Naive thymus-derived CD4-positive, alpha-beta T cell (primary cell): ENCODE measurements at regions of chr1 and their contacts with region 1.

Region 1: DNA sequence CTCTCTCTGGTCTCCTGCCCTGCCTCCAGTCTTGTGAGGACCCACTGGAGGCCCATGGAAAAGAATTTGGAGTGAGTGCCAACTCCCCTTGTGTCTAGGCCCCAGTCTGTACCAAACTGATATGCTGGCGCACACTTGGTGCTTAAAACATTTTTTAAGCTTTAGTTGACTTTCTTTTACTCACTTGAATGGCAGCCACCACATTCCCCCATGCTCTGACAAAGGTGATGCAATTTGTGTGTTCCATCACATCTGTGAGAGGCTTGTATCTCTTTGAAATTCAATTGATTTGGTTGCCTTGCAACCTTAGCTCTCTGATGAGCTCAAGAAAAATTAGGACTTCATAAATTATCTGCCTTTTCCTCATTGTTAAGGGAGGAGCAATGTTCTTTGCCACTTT is 30.5 kb upstream of the WDTC1 start:
- DNase-seq: no peak
- ATAC-seq: no peak
- H3K4me3 ChIP-seq: no peak overlapping the region
- H3K4me3 Mint-ChIP-seq: no peak overlapping the region
- H3K27ac ChIP-seq: no peak overlapping the region
- H3K27ac Mint-ChIP-seq: no peak overlapping the region
- H3K4me1 ChIP-seq: no peaks in the 10 kb centered on the region
- H3K4me1 Mint-ChIP-seq: no peaks in the 10 kb centered on the region
- H3K27me3 ChIP-seq: no peaks in the 10 kb centered on the region
- H3K27me3 Mint-ChIP-seq: peaks cover 0 to 5% (median 0%) of the 10 kb centered on the region in 5 donors

Region 2: DNA sequence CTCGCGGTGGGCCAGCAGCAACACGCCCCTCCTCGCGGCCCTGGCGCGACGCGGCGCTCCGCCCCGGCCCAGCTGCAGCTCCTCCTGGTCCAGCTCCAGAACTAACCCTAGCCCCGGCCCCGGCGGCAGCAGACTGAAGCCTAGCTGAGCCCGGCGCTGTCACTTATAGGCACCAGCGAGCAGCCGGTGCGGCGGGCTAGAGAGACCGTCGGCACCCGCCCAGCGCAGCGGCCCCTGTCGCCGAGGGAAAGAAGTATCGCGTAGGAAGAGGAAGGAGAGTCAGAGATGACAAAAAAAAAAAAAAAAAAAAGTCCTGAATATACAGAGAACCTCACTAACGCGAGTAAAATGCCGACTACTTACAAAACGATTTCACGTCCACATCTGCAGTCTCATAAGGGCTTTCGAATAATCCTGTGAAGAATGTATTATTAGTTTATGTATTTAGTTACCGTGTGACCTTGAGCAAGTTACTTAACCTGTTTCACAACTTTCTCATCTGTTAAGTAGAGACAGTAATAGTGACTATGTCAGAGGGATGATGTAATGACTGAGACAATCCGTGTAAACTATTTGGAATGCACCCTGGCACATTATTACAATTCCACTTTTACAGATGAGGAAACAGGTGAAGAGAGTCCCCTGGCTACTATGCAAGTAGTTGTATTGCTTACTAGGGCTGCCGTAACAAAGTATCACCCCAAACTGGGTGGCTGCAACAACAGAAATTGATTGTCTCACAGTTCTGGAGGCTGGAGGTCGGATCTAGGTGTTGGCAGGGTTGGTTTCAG is 48.8 kb before region 1 on chr1 and contains the start of gene SLC9A1:
- CTCF ChIA-PET with region 1: no interaction called
- POLR2A ChIA-PET with region 1: no interaction called
- intact Hi-C with region 1: loop called in 1 of 2 experiments (anchors 2 kb)
- DNase-seq: peak; percentile 90 to 96 (median 94)
- ATAC-seq: peak; percentile 98
- H3K4me3 ChIP-seq: peak within 1 kb of the TSS; percentile 40
- H3K4me3 Mint-ChIP-seq: peak within 1 kb of the TSS; percentile 82 to 97 (median 90)
- H3K27ac ChIP-seq: peak within 1 kb of the TSS; percentile 90
- H3K27ac Mint-ChIP-seq: peak within 1 kb of the TSS; percentile 96 to 100 (median 99)
- H3K4me1 ChIP-seq: peaks cover 29 to 36% of the 10 kb centered on the region in 2 donors
- H3K4me1 Mint-ChIP-seq: peaks cover 38 to 52% (median 49%) of the 10 kb centered on the region in 7 donors
- H3K27me3 ChIP-seq: no peaks in the 10 kb centered on the region
- H3K27me3 Mint-ChIP-seq: no peaks in the 10 kb centered on the region
- total RNA-seq, gene SLC9A1: 13.2 to 25.7 (median 21.1) TPM

Region 3: DNA sequence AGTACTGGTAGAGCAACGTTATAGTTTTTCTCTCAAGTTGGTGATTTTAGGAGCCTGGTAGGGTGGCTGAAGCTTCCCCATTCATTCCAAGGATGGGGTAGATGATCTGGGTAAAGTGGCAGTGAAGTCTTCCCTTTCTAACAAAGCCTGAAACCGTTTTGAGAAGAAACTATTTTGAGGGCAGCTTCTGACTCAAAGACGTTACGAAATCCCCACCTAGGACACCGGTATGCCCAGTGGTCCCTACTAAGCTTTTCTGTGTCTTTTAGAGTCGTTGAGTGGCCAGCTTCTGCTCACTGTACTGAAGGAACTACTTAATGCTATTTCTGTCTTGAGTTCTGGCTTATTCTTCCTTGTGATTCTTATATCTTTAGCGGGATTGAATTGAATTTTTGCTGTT is 31.9 kb after region 1 on chr1:
- CTCF ChIA-PET with region 1: no interaction called
- POLR2A ChIA-PET with region 1: no interaction called
- intact Hi-C with region 1: no loop called
- DNase-seq: no peak
- ATAC-seq: no peak
- H3K4me3 ChIP-seq: peak overlapping the region; percentile 78
- H3K4me3 Mint-ChIP-seq: peak overlapping the region; percentile 91 to 100 (median 96)
- H3K27ac ChIP-seq: peak overlapping the region; percentile 78
- H3K27ac Mint-ChIP-seq: peak overlapping the region; percentile 83 to 97 (median 92)
- H3K4me1 ChIP-seq: peaks cover 18 to 25% of the 10 kb centered on the region in 2 donors
- H3K4me1 Mint-ChIP-seq: peaks cover 25 to 44% (median 36%) of the 10 kb centered on the region in 7 donors
- H3K27me3 ChIP-seq: no peaks in the 10 kb centered on the region
- H3K27me3 Mint-ChIP-seq: peaks cover 0 to 3% (median 0%) of the 10 kb centered on the region in 5 donors

Region 4: DNA sequence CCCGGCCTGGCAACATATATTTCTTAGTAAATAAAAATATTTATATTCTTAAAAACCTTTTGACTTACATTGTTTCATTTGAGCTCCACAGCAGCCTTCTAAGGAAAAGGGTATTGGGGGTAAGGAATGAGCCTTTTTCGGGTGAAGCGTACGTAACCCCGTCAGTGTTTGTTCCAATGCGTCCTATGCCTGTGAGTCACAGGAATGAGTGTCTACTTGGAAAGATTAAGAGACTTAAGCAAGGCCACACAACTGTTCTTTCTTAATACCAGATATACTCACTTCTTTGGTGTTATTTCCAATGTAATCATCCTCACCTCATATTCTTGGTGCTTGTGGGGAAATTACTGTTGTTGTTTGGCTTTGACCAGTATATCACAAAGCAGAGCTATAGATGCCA is 53.2 kb after region 1 on chr1:
- CTCF ChIA-PET with region 1: no interaction called
- POLR2A ChIA-PET with region 1: no interaction called
- intact Hi-C with region 1: no loop called
- DNase-seq: no peak
- ATAC-seq: no peak
- H3K4me3 ChIP-seq: no peak overlapping the region
- H3K4me3 Mint-ChIP-seq: peak overlapping the region in 4 of 10 donors; percentile 24 to 39 (median 34)
- H3K27ac ChIP-seq: no peak overlapping the region
- H3K27ac Mint-ChIP-seq: peak overlapping the region in 7 of 9 donors; percentile 25 to 90 (median 62)
- H3K4me1 ChIP-seq: peaks cover 0 to 42% of the 10 kb centered on the region in 2 donors
- H3K4me1 Mint-ChIP-seq: peaks cover 25 to 68% (median 50%) of the 10 kb centered on the region in 7 donors
- H3K27me3 ChIP-seq: no peaks in the 10 kb centered on the region
- H3K27me3 Mint-ChIP-seq: no peaks in the 10 kb centered on the region